ENCODE measurements at regions of chrX and their contacts with region 1.

Region 1: DNA sequence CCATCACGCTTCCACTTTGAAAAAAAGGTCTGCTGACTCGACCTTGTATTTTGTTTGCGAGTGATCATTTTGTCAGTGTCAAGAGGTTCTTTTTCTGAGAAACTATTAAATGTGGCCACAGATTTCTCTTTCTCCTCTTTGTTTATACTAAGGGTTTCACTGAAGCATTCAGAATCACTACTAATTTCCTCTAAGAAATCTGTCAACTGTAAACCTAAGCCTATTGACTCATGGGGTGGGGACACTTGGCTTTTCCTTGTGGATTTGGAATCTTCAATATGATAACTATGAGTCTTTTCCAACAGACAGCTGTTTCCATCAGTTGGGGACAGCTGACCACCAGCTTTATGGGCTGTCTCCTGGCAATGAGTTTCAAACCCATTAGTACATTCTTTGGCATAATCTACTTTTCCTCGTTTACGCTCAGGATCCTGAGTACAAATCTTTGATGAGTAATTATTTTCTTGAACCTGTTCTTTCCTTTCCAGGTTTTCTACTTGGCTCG is 13.8 kb downstream of the PGRMC1 start:
- H3K4me3 ChIP-seq: no peak overlapping the region
- H3K27ac ChIP-seq: no peak overlapping the region
- H3K4me1 ChIP-seq: no peaks in the 10 kb centered on the region
- CTCF ChIP-seq: no peak

Region 2: DNA sequence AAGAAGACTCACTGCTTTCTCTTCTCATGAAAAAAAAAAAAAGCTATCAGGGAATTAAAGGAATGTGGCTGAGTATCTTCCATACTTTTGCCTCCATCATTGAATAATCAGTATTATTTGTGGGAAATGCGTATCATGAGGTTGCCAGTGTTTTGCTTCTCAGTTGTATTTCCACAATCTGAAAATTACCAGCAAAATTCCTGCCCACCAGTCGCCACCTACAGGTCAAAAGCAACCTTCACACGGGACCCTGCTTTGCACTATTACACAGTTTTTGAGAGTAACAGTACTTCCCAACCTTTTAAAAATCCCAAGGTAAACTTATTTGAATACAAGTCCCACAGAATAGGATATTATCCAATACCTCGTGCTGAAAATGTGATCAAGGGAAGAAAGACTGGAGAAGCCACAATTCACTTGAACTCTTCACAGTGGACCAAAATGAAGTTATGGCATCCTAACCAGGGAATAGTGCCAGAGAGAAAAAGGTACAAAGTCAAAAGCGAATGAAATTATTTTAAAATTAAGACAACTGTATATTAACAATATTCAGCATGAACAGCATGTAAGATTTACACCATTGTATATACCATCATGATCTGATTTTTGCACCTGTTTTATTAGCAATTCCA is 16.6 kb after region 1 on chrX:
- CTCF ChIA-PET with region 1: interaction called, 18 read pairs
- POLR2A ChIA-PET with region 1: no interaction called
- H3K4me3 ChIP-seq: no peak overlapping the region
- H3K27ac ChIP-seq: no peak overlapping the region
- H3K4me1 ChIP-seq: no peaks in the 10 kb centered on the region
- CTCF ChIP-seq: peak; percentile 42